ENCODE measurements at regions of chr16 and their contacts with region 1.

Region 1: GRCh38 chr16:81940781-81941560 is 70.3 kb downstream of the SDR42E1 start:
- DNase-seq: peak in 1 of 2 experiments; percentile 43
- H3K4me3 ChIP-seq: no peak overlapping the region
- H3K4me3 Mint-ChIP-seq: no peak overlapping the region
- H3K27ac Mint-ChIP-seq: no peak overlapping the region
- H3K4me1 ChIP-seq: no peaks in the 10 kb centered on the region
- H3K4me1 Mint-ChIP-seq: peaks cover 7% of the 10 kb centered on the region
- H3K27me3 ChIP-seq: no peaks in the 10 kb centered on the region
- H3K27me3 Mint-ChIP-seq: no peaks in the 10 kb centered on the region
- CTCF ChIP-seq: peak; percentile 51 to 55

Region 2: DNA sequence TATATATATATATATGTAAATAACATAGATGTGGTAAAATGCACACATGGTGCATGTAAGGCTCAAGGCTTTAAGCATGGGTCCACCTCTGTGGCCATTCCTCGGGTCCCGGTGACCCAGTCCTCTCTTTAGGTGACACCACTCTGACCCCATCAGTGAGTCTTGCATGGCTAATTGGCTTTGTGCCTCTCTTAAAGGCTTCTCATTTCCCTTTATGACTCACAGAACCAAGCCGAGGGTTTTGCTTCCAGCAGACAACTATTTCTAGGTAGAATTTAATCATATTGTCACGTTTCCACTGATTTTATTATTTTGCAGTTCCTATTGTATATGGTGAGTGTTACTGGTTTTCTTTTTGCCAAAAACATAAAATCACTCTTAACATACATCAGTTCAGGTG is 102.2 kb before region 1 on chr16:
- CTCF ChIA-PET with region 1: no interaction called
- POLR2A ChIA-PET with region 1: no interaction called
- intact Hi-C with region 1: no loop called
- DNase-seq: no peak
- H3K4me3 ChIP-seq: no peak overlapping the region
- H3K4me3 Mint-ChIP-seq: no peak overlapping the region
- H3K27ac Mint-ChIP-seq: no peak overlapping the region
- H3K4me1 ChIP-seq: no peaks in the 10 kb centered on the region
- H3K4me1 Mint-ChIP-seq: peaks cover 7% of the 10 kb centered on the region
- H3K27me3 ChIP-seq: no peaks in the 10 kb centered on the region
- H3K27me3 Mint-ChIP-seq: no peaks in the 10 kb centered on the region
- CTCF ChIP-seq: no peak

Region 3: GRCh38 chr16:81996664-81997622 is 56.0 kb after region 1 on chr16:
- CTCF ChIA-PET with region 1: interaction called, 12 read pairs
- POLR2A ChIA-PET with region 1: no interaction called
- intact Hi-C with region 1: loop called (anchors 1 kb)
- DNase-seq: peak in 1 of 2 experiments; percentile 36
- H3K4me3 ChIP-seq: no peak overlapping the region
- H3K4me3 Mint-ChIP-seq: no peak overlapping the region
- H3K27ac Mint-ChIP-seq: no peak overlapping the region
- H3K4me1 ChIP-seq: peaks cover 21% of the 10 kb centered on the region
- H3K4me1 Mint-ChIP-seq: peaks cover 17% of the 10 kb centered on the region
- H3K27me3 ChIP-seq: no peaks in the 10 kb centered on the region
- H3K27me3 Mint-ChIP-seq: no peaks in the 10 kb centered on the region
- CTCF ChIP-seq: peak; percentile 32 to 49

Region 4: GRCh38 chr16:82070656-82071369 is 129.8 kb after region 1 on chr16:
- CTCF ChIA-PET with region 1: no interaction called
- POLR2A ChIA-PET with region 1: no interaction called
- intact Hi-C with region 1: no loop called
- DNase-seq: no peak
- H3K4me3 ChIP-seq: no peak overlapping the region
- H3K4me3 Mint-ChIP-seq: no peak overlapping the region
- H3K27ac Mint-ChIP-seq: no peak overlapping the region
- H3K4me1 ChIP-seq: no peaks in the 10 kb centered on the region
- H3K4me1 Mint-ChIP-seq: no peaks in the 10 kb centered on the region
- H3K27me3 ChIP-seq: no peaks in the 10 kb centered on the region
- H3K27me3 Mint-ChIP-seq: no peaks in the 10 kb centered on the region
- CTCF ChIP-seq: no peak

Region 5: GRCh38 chr16:82229796-82230619 is 289.0 kb after region 1 on chr16:
- CTCF ChIA-PET with region 1: interaction called, 3 read pairs
- POLR2A ChIA-PET with region 1: no interaction called
- intact Hi-C with region 1: loop called (anchors 1 kb)
- DNase-seq: peak; percentile 77 to 84
- H3K4me3 ChIP-seq: no peak overlapping the region
- H3K4me3 Mint-ChIP-seq: no peak overlapping the region
- H3K27ac Mint-ChIP-seq: no peak overlapping the region
- H3K4me1 ChIP-seq: no peaks in the 10 kb centered on the region
- H3K4me1 Mint-ChIP-seq: no peaks in the 10 kb centered on the region
- H3K27me3 ChIP-seq: no peaks in the 10 kb centered on the region
- H3K27me3 Mint-ChIP-seq: peaks cover 9% of the 10 kb centered on the region
- CTCF ChIP-seq: peak; percentile 97 to 98